GM12878 (cell line): ENCODE measurements at regions of chr7 and their contacts with region 1.

Region 1: GRCh38 chr7:134432296-134433152 is 26.4 kb downstream of the AKR1B1 start:
- DNase-seq: peak; percentile 69
- ATAC-seq: peak; percentile 98
- H3K4me3 ChIP-seq: peak overlapping the region; percentile 65; the same call in 1 of the 2 replicates
- H3K27ac ChIP-seq: no peak overlapping the region
- H3K4me1 ChIP-seq: peaks cover 5% of the 10 kb centered on the region
- H3K27me3 ChIP-seq: no peaks in the 10 kb centered on the region
- CTCF ChIP-seq: peak; percentile 53 to 91 (median 73)
- EP300 ChIP-seq: no peak
- POLR2A ChIP-seq: no peak
- RAD21 ChIP-seq: peak; percentile 95

Region 2: DNA sequence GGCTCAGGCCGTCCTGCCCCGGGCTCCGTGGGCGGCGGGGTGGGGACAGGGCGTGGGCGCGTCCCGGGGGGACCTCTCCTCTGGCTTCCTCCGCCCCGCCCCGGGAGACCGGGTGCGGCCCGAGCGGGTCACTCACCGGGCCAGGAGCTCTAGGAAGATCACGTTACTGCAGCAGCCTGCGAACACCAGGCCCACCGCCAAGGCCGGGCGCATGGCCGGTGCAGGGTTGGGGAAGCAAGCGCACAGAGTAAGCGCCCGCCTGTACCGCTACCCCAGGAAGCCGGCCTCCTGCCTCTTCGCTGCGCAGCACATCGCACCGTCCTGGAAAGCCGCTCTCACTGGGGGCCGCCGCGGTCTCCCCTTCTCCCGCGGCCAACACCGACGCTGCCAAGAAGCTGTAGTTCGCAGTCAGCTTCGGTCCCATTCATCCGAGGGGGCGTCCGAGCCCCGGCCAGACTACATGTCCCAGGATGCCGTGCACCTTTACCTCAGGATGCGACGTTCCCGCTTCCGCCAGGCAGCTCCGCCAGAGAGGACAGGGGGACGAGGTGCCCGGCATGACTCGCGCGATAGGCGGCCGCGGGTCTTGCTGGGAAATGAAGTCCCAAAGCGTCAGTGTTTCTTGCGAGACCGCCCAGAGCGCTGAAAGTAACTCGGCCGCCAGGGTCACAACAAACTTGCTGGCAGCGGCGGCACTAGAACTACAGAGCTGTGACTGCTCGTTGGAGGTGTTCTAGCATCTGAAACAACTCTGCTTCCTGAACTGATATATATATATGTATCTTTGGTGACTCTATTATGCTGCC is 115.8 kb before region 1 on chr7 and contains the start of gene SLC35B4:
- CTCF ChIA-PET with region 1: interaction called, 3 read pairs
- POLR2A ChIA-PET with region 1: no interaction called
- RAD21 ChIA-PET with region 1: interaction called, 11 read pairs
- SMC1A ChIA-PET with region 1: no interaction called
- in situ Hi-C with region 1: no loop called
- intact Hi-C with region 1: no loop called
- DNase-seq: peak; percentile 86
- ATAC-seq: peak; percentile 99
- H3K4me3 ChIP-seq: peak within 1 kb of the TSS; percentile 76
- H3K27ac ChIP-seq: peak within 1 kb of the TSS; percentile 62
- H3K4me1 ChIP-seq: no peaks in the 10 kb centered on the region
- H3K27me3 ChIP-seq: no peaks in the 10 kb centered on the region
- CTCF ChIP-seq: peak in 2 of 3 experiments; percentile 18 to 25; a peak in 1 of 6 replicates
- EP300 ChIP-seq: no peak
- POLR2A ChIP-seq: peak; percentile 80
- RAD21 ChIP-seq: no peak
- polyA plus RNA-seq, gene SLC35B4: 3.6 to 6.0 TPM

Region 3: GRCh38 chr7:134480736-134481135 is 48.2 kb after region 1 on chr7:
- CTCF ChIA-PET with region 1: interaction called, 14 read pairs
- POLR2A ChIA-PET with region 1: no interaction called
- RAD21 ChIA-PET with region 1: interaction called, 10 read pairs
- SMC1A ChIA-PET with region 1: interaction called, 8 read pairs
- in situ Hi-C with region 1: no loop called
- intact Hi-C with region 1: no loop called
- DNase-seq: no peak
- ATAC-seq: no peak
- H3K4me3 ChIP-seq: no peak overlapping the region
- H3K27ac ChIP-seq: no peak overlapping the region
- H3K4me1 ChIP-seq: no peaks in the 10 kb centered on the region
- H3K27me3 ChIP-seq: no peaks in the 10 kb centered on the region
- CTCF ChIP-seq: no peak
- EP300 ChIP-seq: no peak
- POLR2A ChIP-seq: no peak
- RAD21 ChIP-seq: no peak

Region 4: GRCh38 chr7:134547397-134548054 is 115.0 kb after region 1 on chr7:
- CTCF ChIA-PET with region 1: interaction called, 50 read pairs
- POLR2A ChIA-PET with region 1: interaction called, 10 read pairs
- RAD21 ChIA-PET with region 1: interaction called, 30 read pairs
- SMC1A ChIA-PET with region 1: interaction called, 26 read pairs
- in situ Hi-C with region 1: no loop called
- intact Hi-C with region 1: loop called (anchors 1 kb)
- DNase-seq: peak; percentile 39
- ATAC-seq: peak; percentile 87
- H3K4me3 ChIP-seq: no peak overlapping the region; the same call in 1 of the 2 replicates
- H3K27ac ChIP-seq: no peak overlapping the region
- H3K4me1 ChIP-seq: peaks cover 21% of the 10 kb centered on the region
- H3K27me3 ChIP-seq: no peaks in the 10 kb centered on the region
- CTCF ChIP-seq: peak; percentile 72 to 87 (median 74)
- EP300 ChIP-seq: no peak
- POLR2A ChIP-seq: no peak
- RAD21 ChIP-seq: peak; percentile 34; the same call in 1 of the 2 replicates

Region 5: GRCh38 chr7:134605973-134606923 is 173.7 kb after region 1 on chr7:
- CTCF ChIA-PET with region 1: interaction called, 81 read pairs
- POLR2A ChIA-PET with region 1: interaction called, 4 read pairs
- RAD21 ChIA-PET with region 1: interaction called, 39 read pairs
- SMC1A ChIA-PET with region 1: interaction called, 62 read pairs
- in situ Hi-C with region 1: loop called (anchors 5 kb)
- intact Hi-C with region 1: loop called (anchors 1 kb)
- DNase-seq: no peak
- ATAC-seq: peak; percentile 99
- H3K4me3 ChIP-seq: no peak overlapping the region
- H3K27ac ChIP-seq: no peak overlapping the region
- H3K4me1 ChIP-seq: no peaks in the 10 kb centered on the region
- H3K27me3 ChIP-seq: no peaks in the 10 kb centered on the region
- CTCF ChIP-seq: peak; percentile 86 to 91 (median 88)
- EP300 ChIP-seq: no peak
- POLR2A ChIP-seq: no peak
- RAD21 ChIP-seq: peak; percentile 92

Region 6: DNA sequence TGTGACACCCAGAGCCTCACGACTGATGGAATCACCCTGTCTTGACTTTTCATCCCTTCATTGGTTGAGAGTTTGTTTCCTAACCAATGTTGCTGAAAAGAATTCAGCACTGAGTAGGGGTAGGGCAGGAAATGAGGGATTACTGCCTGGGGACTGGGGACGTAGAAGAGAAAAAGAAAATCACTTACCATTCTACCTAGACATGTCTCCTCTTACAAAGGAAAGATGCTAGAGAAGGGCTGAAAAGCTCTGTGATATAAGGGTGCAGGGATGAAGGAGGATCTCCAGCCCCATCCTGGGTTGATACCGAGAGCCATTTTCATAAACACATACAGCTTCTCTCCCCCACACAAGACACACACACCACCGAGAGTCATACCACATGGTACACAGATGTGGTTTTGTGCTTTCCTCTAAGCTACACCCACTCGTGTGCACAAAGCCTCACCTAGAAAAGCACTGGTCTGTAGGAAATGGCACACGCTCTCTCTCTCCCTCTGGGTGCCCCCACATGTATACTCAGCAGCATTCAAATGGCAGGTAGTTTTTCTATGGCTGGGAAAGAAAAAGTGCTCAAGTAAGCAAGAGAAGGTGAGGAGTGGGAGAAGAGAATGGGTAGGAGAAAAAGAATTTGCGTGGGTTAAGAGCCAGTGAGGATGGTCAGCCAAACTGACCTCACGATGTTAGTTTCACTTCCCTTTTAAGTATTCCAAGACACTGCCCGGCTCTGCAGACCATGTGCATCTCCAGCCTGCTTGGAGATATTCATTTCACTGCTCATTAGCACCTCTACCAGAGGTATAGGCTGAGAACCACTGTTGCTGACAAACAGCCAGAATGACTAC is 432.7 kb after region 1 on chr7:
- CTCF ChIA-PET with region 1: no interaction called
- POLR2A ChIA-PET with region 1: no interaction called
- RAD21 ChIA-PET with region 1: no interaction called
- SMC1A ChIA-PET with region 1: no interaction called
- in situ Hi-C with region 1: no loop called
- intact Hi-C with region 1: no loop called
- DNase-seq: peak; percentile 19
- ATAC-seq: peak; percentile 91
- H3K4me3 ChIP-seq: no peak overlapping the region
- H3K27ac ChIP-seq: no peak overlapping the region
- H3K4me1 ChIP-seq: no peaks in the 10 kb centered on the region
- H3K27me3 ChIP-seq: no peaks in the 10 kb centered on the region
- CTCF ChIP-seq: no peak
- EP300 ChIP-seq: 0 out of 4 replicates have a peak, but pooled peaks of 1 of the 2 experiments have one; percentile 28
- POLR2A ChIP-seq: no peak
- RAD21 ChIP-seq: no peak

Region 7: GRCh38 chr7:134954197-134955082 is 521.9 kb after region 1 on chr7:
- CTCF ChIA-PET with region 1: interaction called, 7 read pairs
- POLR2A ChIA-PET with region 1: no interaction called
- RAD21 ChIA-PET with region 1: interaction called, 4 read pairs
- SMC1A ChIA-PET with region 1: interaction called, 5 read pairs
- in situ Hi-C with region 1: no loop called
- intact Hi-C with region 1: loop called (anchors 5 kb)
- DNase-seq: peak; percentile 15
- ATAC-seq: peak; percentile 83
- H3K4me3 ChIP-seq: no peak overlapping the region
- H3K27ac ChIP-seq: no peak overlapping the region
- H3K4me1 ChIP-seq: no peaks in the 10 kb centered on the region; the same call in 1 of the 2 replicates
- H3K27me3 ChIP-seq: no peaks in the 10 kb centered on the region
- CTCF ChIP-seq: peak; percentile 49 to 64 (median 58)
- EP300 ChIP-seq: no peak
- POLR2A ChIP-seq: no peak
- RAD21 ChIP-seq: peak; percentile 72